B cell (primary cell): ENCODE measurements at regions of chr11 and their contacts with region 1.

Region 1: GRCh38 chr11:57456960-57457642 is 3.2 kb upstream of the RTN4RL2 start:
- DNase-seq: peak; percentile 86
- ATAC-seq: peak; percentile 70
- H3K4me3 ChIP-seq: no peak overlapping the region
- H3K4me3 Mint-ChIP-seq: peak overlapping the region; percentile 67
- H3K27ac ChIP-seq: no peak overlapping the region
- H3K27ac Mint-ChIP-seq: no peak overlapping the region
- H3K4me1 ChIP-seq: peaks cover 37 to 41% of the 10 kb centered on the region in 2 donors
- H3K4me1 Mint-ChIP-seq: peaks cover 26% of the 10 kb centered on the region
- H3K27me3 ChIP-seq: peaks cover 0 to 51% (median 28%) of the 10 kb centered on the region in 4 experiments
- H3K27me3 Mint-ChIP-seq: peaks cover 48% of the 10 kb centered on the region
- CTCF ChIP-seq: peak; percentile 97

Region 2: DNA sequence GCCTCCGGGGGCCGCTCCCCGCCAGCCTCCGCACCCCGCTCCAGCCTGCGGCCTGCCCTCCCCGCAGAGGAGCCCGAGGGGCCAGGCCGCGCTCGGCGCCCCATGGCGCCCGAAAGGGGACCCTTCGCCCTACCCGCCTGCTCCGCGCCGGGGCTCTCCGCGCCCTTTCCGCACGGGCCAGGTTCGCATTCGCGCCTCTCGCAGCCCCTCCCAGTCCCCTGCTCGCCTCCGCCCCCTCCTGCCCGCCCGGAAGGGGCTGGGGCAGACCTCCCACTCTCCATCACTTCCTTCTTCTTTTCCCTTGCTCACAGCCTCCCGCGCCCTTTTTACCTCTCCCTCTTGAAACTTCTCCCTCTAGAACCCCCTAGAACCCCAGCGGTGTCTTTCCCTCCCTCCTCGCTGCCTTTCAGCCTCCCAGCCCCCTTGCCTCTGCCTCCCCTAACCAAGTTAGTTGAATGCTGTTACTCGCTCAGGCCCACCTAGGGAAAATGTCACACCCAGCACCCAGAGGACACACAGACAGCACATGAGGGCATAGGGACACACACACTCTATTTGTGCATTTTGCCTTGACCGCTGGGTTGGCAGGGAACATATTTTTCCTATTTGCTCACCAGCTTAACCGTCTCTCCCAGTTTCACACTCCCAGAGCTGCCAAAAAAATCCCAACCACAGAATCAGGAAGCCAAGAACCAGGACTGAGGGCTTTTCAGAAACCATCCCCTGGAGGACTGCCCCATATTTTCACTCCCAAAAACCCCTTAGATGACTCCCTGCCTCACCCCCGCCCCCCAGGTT is 30.0 kb before region 1 on chr11 and contains the start of gene SLC43A3:
- CTCF ChIA-PET with region 1: interaction called, 22 read pairs
- POLR2A ChIA-PET with region 1: no interaction called
- intact Hi-C with region 1: loop called (anchors 2 kb)
- DNase-seq: peak; percentile 78
- ATAC-seq: peak; percentile 88
- H3K4me3 ChIP-seq: peak within 1 kb of the TSS; percentile 32 to 90 (median 66)
- H3K4me3 Mint-ChIP-seq: peak within 1 kb of the TSS; percentile 91
- H3K27ac ChIP-seq: peak within 1 kb of the TSS; percentile 29 to 68
- H3K27ac Mint-ChIP-seq: peak within 1 kb of the TSS; percentile 92
- H3K4me1 ChIP-seq: peaks cover 28 to 33% of the 10 kb centered on the region in 2 donors
- H3K4me1 Mint-ChIP-seq: peaks cover 36% of the 10 kb centered on the region
- H3K27me3 ChIP-seq: no peaks in the 10 kb centered on the region
- H3K27me3 Mint-ChIP-seq: no peaks in the 10 kb centered on the region
- CTCF ChIP-seq: no peak
- total RNA-seq, gene SLC43A3: 19.3 and 20.9 TPM in 2 replicates

Region 3: DNA sequence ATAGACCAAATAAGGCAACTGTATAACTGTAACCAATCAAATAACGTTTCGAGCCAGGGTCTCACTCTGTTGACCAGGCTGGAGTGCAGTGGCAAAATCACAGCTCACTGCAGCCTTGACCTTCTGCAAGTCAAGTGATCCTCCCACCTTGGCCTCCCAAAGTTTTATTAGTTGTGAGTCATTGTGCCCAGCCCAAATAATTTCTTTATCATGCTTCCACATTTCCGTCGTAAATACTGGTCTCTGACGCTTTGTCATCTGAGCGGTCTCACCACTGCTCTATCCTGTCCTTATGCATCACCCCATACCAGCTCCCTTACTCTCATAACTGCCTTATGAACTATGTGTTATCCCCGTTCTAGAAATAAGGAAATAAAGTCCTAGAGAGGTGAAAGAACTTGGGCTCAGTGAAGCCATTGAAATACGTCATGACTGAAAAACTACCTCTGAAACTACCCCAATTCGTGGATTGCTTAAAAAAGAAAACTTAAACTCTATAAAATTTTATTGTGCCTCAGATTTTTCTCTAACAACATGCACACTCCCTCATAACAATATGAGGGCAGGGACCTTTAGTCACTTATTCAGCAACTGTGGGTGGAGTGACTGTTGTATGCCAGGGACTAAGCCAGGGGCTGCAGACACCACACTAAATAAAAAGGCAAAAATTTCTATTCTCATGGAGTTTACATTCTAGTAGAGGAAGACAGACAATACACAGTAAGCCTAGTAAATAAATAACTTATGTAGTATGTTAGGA is 12.6 kb before region 1 on chr11:
- CTCF ChIA-PET with region 1: interaction called, 28 read pairs
- POLR2A ChIA-PET with region 1: no interaction called
- intact Hi-C with region 1: no loop called
- DNase-seq: no peak
- ATAC-seq: no peak
- H3K4me3 ChIP-seq: no peak overlapping the region
- H3K4me3 Mint-ChIP-seq: no peak overlapping the region
- H3K27ac ChIP-seq: no peak overlapping the region
- H3K27ac Mint-ChIP-seq: no peak overlapping the region
- H3K4me1 ChIP-seq: no peaks in the 10 kb centered on the region
- H3K4me1 Mint-ChIP-seq: no peaks in the 10 kb centered on the region
- H3K27me3 ChIP-seq: peaks cover 0 to 5% (median 2%) of the 10 kb centered on the region in 4 experiments
- H3K27me3 Mint-ChIP-seq: peaks cover 20% of the 10 kb centered on the region
- CTCF ChIP-seq: no peak

Region 4: GRCh38 chr11:57493507-57494503 is 36.7 kb after region 1 on chr11:
- CTCF ChIA-PET with region 1: interaction called, 78 read pairs
- POLR2A ChIA-PET with region 1: no interaction called
- intact Hi-C with region 1: loop called (anchors 5 kb)
- DNase-seq: peak; percentile 77
- ATAC-seq: peak; percentile 96
- H3K4me3 ChIP-seq: no peak overlapping the region
- H3K4me3 Mint-ChIP-seq: no peak overlapping the region
- H3K27ac ChIP-seq: no peak overlapping the region
- H3K27ac Mint-ChIP-seq: no peak overlapping the region
- H3K4me1 ChIP-seq: no peaks in the 10 kb centered on the region
- H3K4me1 Mint-ChIP-seq: peaks cover 2% of the 10 kb centered on the region
- H3K27me3 ChIP-seq: no peaks in the 10 kb centered on the region
- H3K27me3 Mint-ChIP-seq: no peaks in the 10 kb centered on the region
- CTCF ChIP-seq: peak; percentile 97

Region 5: DNA sequence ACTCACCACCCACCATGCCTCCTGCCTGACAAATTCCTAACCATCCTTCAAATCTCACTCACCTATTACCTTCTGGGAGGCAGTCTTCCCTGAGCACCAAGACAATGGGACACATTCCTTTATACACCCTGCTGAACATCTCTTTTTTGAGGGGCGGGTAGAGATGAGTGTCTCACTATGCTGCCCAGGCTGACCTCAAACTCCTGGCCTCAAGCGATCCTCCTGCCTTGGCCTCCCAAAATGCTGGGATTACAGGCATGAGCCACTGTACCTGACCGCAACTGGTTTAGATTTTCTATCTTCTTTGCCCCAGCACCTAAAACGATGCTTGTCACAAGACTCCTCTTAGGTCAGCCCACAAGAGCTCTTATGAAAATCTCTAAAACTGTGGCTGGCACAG is 66.3 kb after region 1 on chr11:
- CTCF ChIA-PET with region 1: interaction called, 348 read pairs
- POLR2A ChIA-PET with region 1: interaction called, 6 read pairs
- intact Hi-C with region 1: loop called (anchors 1 kb)
- DNase-seq: no peak
- ATAC-seq: no peak
- H3K4me3 ChIP-seq: no peak overlapping the region
- H3K4me3 Mint-ChIP-seq: no peak overlapping the region
- H3K27ac ChIP-seq: no peak overlapping the region
- H3K27ac Mint-ChIP-seq: no peak overlapping the region
- H3K4me1 ChIP-seq: no peaks in the 10 kb centered on the region
- H3K4me1 Mint-ChIP-seq: no peaks in the 10 kb centered on the region
- H3K27me3 ChIP-seq: no peaks in the 10 kb centered on the region
- H3K27me3 Mint-ChIP-seq: no peaks in the 10 kb centered on the region
- CTCF ChIP-seq: no peak

Region 6: DNA sequence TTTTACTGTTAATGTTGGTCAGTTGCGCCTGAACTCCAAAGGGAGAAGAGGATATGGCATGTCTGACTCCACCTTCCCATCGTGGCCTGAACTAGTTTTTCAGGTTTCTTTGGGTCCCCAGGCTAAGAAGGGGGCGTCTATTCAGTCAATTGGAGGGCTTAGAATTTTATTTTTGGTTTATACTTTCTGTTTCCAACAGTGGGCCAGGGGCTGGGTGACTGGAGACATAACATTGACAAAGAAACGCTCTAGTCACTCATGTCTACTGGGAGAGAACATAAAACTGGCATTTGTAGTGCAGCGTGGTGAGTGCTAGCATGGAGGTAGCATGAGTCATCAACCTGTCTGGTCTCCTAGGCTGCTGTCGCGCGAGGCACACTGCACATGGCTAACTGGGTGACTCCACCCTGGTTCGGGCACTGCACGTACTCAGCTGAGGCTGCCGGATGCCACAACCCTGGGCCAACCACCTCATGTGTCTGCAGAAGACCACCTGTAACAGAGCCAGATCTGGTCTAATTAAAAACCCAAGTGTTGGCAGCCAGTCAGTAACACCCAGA is 446.5 kb after region 1 on chr11:
- CTCF ChIA-PET with region 1: no interaction called
- POLR2A ChIA-PET with region 1: no interaction called
- intact Hi-C with region 1: no loop called
- DNase-seq: no peak
- ATAC-seq: no peak
- H3K4me3 ChIP-seq: no peak overlapping the region
- H3K4me3 Mint-ChIP-seq: no peak overlapping the region
- H3K27ac ChIP-seq: no peak overlapping the region
- H3K27ac Mint-ChIP-seq: no peak overlapping the region
- H3K4me1 ChIP-seq: no peaks in the 10 kb centered on the region
- H3K4me1 Mint-ChIP-seq: no peaks in the 10 kb centered on the region
- H3K27me3 ChIP-seq: peaks cover 0 to 5% (median 0%) of the 10 kb centered on the region in 4 experiments
- H3K27me3 Mint-ChIP-seq: peaks cover 20% of the 10 kb centered on the region
- CTCF ChIP-seq: no peak

Region 7: GRCh38 chr11:58513747-58514367 is 1056.8 kb after region 1 on chr11:
- CTCF ChIA-PET with region 1: interaction called, 3 read pairs
- POLR2A ChIA-PET with region 1: no interaction called
- intact Hi-C with region 1: loop called (anchors 2 kb)
- DNase-seq: peak; percentile 39
- ATAC-seq: no peak
- H3K4me3 ChIP-seq: no peak overlapping the region
- H3K4me3 Mint-ChIP-seq: no peak overlapping the region
- H3K27ac ChIP-seq: no peak overlapping the region
- H3K27ac Mint-ChIP-seq: no peak overlapping the region
- H3K4me1 ChIP-seq: no peaks in the 10 kb centered on the region
- H3K4me1 Mint-ChIP-seq: no peaks in the 10 kb centered on the region
- H3K27me3 ChIP-seq: no peaks in the 10 kb centered on the region
- H3K27me3 Mint-ChIP-seq: no peaks in the 10 kb centered on the region
- CTCF ChIP-seq: peak; percentile 14